Psoas muscle (tissue), 8 donors: ENCODE measurements at regions of chr1 and their contacts with region 1.

Region 1: DNA sequence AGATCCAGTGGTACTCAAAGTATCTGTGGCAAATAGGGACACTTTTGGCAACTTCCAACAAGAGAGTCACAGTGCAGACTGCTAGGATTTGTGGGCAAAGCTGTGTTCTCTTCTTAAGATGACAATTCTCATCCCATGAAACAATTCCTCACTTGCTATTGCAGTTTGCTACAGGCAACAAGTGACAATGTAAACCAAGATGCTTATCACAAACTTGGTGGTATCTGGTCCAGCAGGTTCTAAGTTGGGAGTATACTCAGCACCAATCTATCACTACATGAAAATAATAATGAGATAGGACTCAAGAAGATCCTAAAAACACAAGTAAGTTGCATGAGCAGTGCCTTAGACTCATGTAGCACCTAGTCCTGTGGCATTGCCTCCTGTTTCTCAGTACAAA is 3.4 kb upstream of the OVAAL start:
- DNase-seq: no peak
- ATAC-seq: no peak
- H3K4me3 ChIP-seq: no peak overlapping the region
- H3K27ac ChIP-seq: no peak overlapping the region
- H3K4me1 ChIP-seq: peaks cover 4% of the 10 kb centered on the region
- H3K27me3 ChIP-seq: no peaks in the 10 kb centered on the region
- CTCF ChIP-seq: no peak

Region 2: DNA sequence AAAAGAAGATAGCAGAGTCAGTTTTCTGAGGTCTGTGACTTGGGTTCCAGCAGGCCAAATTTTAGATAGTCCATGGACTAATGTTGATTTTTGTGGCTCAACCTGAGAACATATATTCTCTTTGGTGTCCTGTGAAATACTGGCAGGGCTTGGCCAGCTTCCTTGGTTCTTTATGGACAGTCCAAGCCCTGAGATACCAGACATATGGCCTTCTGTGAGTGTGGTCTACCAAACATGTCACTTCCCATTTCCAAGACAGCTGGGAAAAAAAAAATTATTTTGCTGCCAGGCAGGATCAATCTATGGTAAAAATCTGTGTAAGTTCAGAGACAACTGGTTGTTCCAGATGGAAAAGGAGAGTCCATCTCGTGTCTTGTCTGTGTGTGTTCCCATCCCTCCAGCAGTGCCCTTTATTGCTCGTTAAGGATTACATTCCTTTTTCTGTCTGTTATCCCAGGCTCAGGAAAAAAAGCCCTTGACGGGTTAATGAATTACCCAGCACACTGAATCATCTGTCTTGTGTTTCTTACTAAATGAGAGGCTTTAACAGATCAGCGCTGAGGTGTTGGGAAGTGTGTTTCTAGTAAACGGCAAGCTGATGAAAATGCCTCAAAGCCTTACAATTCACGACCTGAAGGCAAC is 43.1 kb after region 1 on chr1:
- intact Hi-C with region 1: loop called in 1 of 2 experiments (anchors 5 kb)
- DNase-seq: no peak
- ATAC-seq: no peak
- H3K4me3 ChIP-seq: no peak overlapping the region
- H3K27ac ChIP-seq: no peak overlapping the region
- H3K4me1 ChIP-seq: no peaks in the 10 kb centered on the region
- H3K27me3 ChIP-seq: peaks cover 0 to 2% (median 0%) of the 10 kb centered on the region in 3 donors
- CTCF ChIP-seq: no peak

Region 3: GRCh38 chr1:180674603-180675530 is 119.5 kb after region 1 on chr1:
- intact Hi-C with region 1: no loop called
- DNase-seq: no peak
- ATAC-seq: no peak
- H3K4me3 ChIP-seq: no peak overlapping the region
- H3K27ac ChIP-seq: no peak overlapping the region
- H3K4me1 ChIP-seq: no peaks in the 10 kb centered on the region
- H3K27me3 ChIP-seq: no peaks in the 10 kb centered on the region
- CTCF ChIP-seq: no peak